ENCODE measurements at regions of chr11 and their contacts with region 1.

Region 1: GRCh38 chr11:65711785-65712632 is at the start of gene KAT5:
- DNase-seq: peak; percentile 97 to 98
- ATAC-seq: peak; percentile 92 to 94
- H3K4me3 ChIP-seq: peak within 1 kb of the TSS; percentile 73 to 97 (median 84)
- H3K27ac ChIP-seq: peak within 1 kb of the TSS; percentile 96 to 100 (median 99)
- H3K4me1 ChIP-seq: peaks cover 15 to 18% of the 10 kb centered on the region in 2 donors
- H3K27me3 ChIP-seq: no peaks in the 10 kb centered on the region
- CTCF ChIP-seq: peak; percentile 98 to 100 (median 100)
- POLR2A ChIP-seq: peak; percentile 83 to 86
- total RNA-seq, gene KAT5: 40.0 to 69.4 (median 50.0) TPM

Region 2: GRCh38 chr11:65773784-65774411 is 61.9 kb after region 1 on chr11:
- in situ Hi-C with region 1: no loop called
- intact Hi-C with region 1: loop called (anchors 1 kb)
- DNase-seq: no peak
- ATAC-seq: no peak
- H3K4me3 ChIP-seq: no peak overlapping the region
- H3K27ac ChIP-seq: no peak overlapping the region
- H3K4me1 ChIP-seq: peaks cover 0 to 8% of the 10 kb centered on the region in 2 donors
- H3K27me3 ChIP-seq: no peaks in the 10 kb centered on the region
- CTCF ChIP-seq: no peak
- POLR2A ChIP-seq: no peak

Region 3: DNA sequence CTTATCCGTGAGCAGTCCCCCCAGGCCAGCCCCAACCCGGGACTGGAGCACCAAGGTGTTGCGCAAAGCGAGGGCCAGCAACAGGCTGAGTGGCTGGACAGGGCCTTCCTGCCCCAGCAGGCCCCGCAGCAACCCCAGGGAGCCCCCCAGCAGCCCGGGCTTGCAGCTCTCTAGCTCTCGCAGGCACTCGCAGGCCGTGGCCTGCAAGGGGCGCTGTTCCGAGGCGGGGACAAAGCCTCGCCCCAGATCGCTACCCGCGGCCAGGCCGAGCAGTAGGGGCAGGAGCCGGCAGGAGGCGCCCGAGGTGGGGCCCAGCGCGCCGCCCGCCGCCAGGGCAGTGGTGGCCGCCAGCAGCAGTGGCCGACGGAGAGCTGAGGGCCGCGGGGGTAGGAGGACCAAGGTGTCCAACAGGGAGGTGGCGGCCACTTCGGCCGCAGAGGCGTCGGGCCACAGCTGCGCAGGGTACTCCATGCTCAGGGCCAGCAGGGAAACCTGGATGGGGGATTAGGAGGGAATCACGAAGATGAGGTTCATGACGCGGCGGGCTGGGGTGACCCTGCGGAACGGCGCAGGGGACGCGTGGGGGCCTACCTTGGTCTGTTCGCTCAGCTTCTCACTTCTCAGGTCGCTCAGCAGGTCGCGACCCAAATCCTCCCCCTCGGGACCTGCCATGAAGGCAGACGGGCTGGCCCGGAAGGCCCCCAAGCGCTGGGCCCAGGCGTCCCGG is 68.0 kb after region 1 on chr11:
- in situ Hi-C with region 1: no loop called
- intact Hi-C with region 1: loop called (anchors 2 kb)
- DNase-seq: peak in 1 of 2 donors; percentile 72
- ATAC-seq: peak; percentile 61 to 65
- H3K4me3 ChIP-seq: peak overlapping the region; percentile 59 to 97 (median 74)
- H3K27ac ChIP-seq: peak overlapping the region; percentile 59 to 88 (median 80)
- H3K4me1 ChIP-seq: peaks cover 9% of the 10 kb centered on the region in 2 donors
- H3K27me3 ChIP-seq: peaks cover 0 to 7% (median 4%) of the 10 kb centered on the region in 3 donors
- CTCF ChIP-seq: peak; percentile 77 to 99 (median 87)
- POLR2A ChIP-seq: peak in 1 of 2 donors; percentile 44

Region 4: GRCh38 chr11:65884686-65885092 is 172.7 kb after region 1 on chr11:
- in situ Hi-C with region 1: no loop called
- intact Hi-C with region 1: no loop called
- DNase-seq: peak in 1 of 2 donors; percentile 61
- ATAC-seq: peak in 1 of 2 donors; percentile 19
- H3K4me3 ChIP-seq: no peak overlapping the region
- H3K27ac ChIP-seq: no peak overlapping the region
- H3K4me1 ChIP-seq: peaks cover 16 to 19% of the 10 kb centered on the region in 2 donors
- H3K27me3 ChIP-seq: no peaks in the 10 kb centered on the region
- CTCF ChIP-seq: peak; percentile 98 to 99 (median 99)
- POLR2A ChIP-seq: no peak